Activated naive CD4-positive, alpha-beta T cell treated with anti-CD3 and anti-CD28 coated beads, Interleukin-2, amount 10 ng/mL, durations not matched to agents 7 days and 5 days (primary cell): ENCODE measurements at regions of chr17 and their contacts with region 1.

Region 1: DNA sequence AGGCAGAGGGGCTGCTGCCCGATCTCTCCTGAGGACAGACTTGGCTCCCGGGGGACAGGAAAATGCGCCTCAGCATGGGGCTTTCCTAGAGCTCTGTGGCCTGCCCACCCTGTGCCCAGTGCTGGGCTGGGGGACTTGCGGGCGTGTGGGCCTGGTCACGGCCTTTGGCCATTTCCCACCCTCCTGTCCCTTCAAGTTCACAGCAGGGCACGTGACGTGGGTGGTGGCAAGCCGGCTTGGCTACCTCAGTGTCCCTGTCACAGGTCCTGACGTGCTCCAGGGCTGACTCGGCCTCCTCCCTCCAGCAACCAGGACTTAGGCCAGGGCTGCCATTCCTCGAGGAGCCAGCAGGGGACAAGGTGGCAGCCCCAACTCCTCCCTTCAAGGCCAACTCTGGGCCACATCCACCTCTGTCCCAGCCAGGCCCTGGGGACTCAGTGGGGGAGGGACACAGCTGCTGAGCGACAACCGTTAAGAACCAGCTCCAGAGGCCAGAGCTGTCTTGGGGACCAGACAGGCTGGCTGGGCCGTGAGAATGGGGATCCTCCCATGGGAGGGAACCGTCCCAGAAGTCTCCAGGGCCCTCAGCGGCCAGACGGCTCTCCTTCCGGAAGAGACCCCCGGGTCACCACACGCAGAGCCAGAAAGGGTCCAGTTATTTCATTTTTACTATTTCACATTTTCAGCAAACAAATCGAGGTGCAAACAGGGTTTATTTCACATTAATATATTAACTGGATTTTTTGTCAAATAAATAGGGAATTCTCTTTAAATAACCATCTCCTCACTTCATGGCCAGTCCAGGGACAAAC is 1.1 kb upstream of the UNC13D start:
- DNase-seq: peak; percentile 76
- H3K4me3 Mint-ChIP-seq: peak overlapping the region; percentile 52
- H3K27ac Mint-ChIP-seq: peak overlapping the region; percentile 97
- H3K4me1 Mint-ChIP-seq: peaks cover 31% of the 10 kb centered on the region
- H3K27me3 Mint-ChIP-seq: no peaks in the 10 kb centered on the region

Region 2: DNA sequence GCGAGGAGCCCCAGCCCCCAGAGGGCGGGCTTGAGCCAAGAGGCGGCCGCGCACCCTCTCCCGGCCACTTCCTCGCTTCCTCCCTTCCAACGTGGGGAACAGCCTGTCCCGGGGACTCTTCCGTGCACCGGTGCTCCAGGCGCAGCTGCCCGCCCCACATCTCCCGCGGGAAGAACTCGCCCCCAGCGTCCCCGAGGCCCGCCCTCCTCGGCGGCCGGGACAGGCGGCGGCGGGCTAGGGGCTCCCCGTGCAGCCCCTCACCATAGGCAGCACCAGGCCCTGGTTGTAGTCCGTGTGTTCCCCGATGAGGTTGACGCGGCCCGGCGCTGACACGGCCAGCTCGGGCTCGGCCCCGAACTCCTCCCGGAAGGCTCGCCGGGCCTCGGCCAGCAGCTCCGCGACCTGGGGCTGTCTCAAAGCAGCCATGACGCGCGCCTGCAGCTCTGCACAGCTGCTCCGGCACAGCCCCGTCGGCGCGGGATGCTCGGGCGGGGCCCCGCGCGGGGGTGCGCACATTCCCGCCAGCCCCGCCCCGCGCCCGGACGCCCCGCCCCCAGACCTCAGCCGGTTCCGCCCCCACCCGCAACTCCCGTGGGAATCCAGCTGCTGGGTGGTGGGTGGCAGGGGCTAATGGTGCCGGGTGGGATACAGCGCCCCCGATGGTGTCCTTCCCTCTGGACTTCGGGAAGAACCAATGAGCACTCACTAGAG is 80.4 kb before region 1 on chr17 and contains the start of gene GALK1:
- CTCF ChIA-PET with region 1: interaction called, 28 read pairs
- DNase-seq: peak; percentile 82
- H3K4me3 Mint-ChIP-seq: peak within 1 kb of the TSS; percentile 78
- H3K27ac Mint-ChIP-seq: peak within 1 kb of the TSS; percentile 76
- H3K4me1 Mint-ChIP-seq: peaks cover 17% of the 10 kb centered on the region
- H3K27me3 Mint-ChIP-seq: peaks cover 16% of the 10 kb centered on the region

Region 3: GRCh38 chr17:75795820-75796607 is 49.2 kb before region 1 on chr17:
- CTCF ChIA-PET with region 1: no interaction called
- DNase-seq: no peak
- H3K4me3 Mint-ChIP-seq: no peak overlapping the region
- H3K27ac Mint-ChIP-seq: no peak overlapping the region
- H3K4me1 Mint-ChIP-seq: peaks cover 14% of the 10 kb centered on the region
- H3K27me3 Mint-ChIP-seq: no peaks in the 10 kb centered on the region

Region 4: DNA sequence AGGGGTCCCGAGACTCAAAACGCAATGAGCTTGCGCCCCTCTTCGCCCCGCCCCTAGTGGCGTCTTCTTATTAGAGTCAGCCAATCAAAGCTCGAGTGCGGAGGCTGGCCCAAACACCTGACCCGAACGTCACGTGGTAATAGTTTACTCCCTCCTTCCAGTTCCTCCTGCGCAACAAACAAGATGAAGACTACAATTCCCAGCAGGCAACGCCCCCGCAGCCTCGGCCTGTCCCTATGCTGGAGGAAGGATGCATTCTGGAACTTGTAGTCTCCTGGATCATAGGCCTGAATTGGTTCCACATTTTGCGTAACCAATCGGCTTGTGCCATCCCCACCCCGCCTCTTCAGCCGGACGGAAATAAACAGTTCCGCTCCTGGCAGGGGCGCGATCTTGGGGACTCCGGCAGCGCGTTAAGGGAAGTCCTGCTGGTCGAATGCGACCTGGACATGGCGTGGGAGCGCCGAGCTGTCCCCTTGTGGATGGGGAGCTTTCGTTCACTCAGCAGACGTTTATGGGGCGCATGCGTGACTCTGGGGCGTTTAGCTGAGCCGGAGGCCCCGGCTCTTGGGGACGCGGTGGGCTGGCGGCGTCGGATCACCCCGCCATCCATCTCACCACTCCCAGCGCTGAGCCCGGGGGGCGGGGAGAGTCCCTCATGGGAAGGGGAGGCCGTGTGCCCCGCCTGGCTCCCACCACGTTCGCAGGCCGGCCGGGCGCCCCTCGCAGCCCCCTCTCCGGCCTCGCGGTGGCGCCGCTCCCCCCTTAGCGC is 10.2 kb after region 1 on chr17 and contains the start of gene WBP2:
- CTCF ChIA-PET with region 1: interaction called, 74 read pairs
- DNase-seq: peak; percentile 99
- H3K4me3 Mint-ChIP-seq: no peak within 1 kb of the TSS
- H3K27ac Mint-ChIP-seq: peak within 1 kb of the TSS; percentile 91
- H3K4me1 Mint-ChIP-seq: peaks cover 43% of the 10 kb centered on the region
- H3K27me3 Mint-ChIP-seq: no peaks in the 10 kb centered on the region

Region 5: GRCh38 chr17:75864448-75864871 is 19.2 kb after region 1 on chr17:
- CTCF ChIA-PET with region 1: interaction called, 74 read pairs
- DNase-seq: peak; percentile 77
- H3K4me3 Mint-ChIP-seq: peak overlapping the region; percentile 6
- H3K27ac Mint-ChIP-seq: peak overlapping the region; percentile 91
- H3K4me1 Mint-ChIP-seq: peaks cover 30% of the 10 kb centered on the region
- H3K27me3 Mint-ChIP-seq: no peaks in the 10 kb centered on the region